ENCODE measurements at regions of chr6 and their contacts with region 1.

Region 1: GRCh38 chr6:128655978-128656498 is 135.6 kb upstream of the PTPRK start:
- DNase-seq: no peak
- H3K4me3 Mint-ChIP-seq: no peak overlapping the region
- H3K27ac Mint-ChIP-seq: peak overlapping the region; percentile 25
- H3K4me1 Mint-ChIP-seq: no peaks in the 10 kb centered on the region
- H3K27me3 Mint-ChIP-seq: no peaks in the 10 kb centered on the region

Region 2: DNA sequence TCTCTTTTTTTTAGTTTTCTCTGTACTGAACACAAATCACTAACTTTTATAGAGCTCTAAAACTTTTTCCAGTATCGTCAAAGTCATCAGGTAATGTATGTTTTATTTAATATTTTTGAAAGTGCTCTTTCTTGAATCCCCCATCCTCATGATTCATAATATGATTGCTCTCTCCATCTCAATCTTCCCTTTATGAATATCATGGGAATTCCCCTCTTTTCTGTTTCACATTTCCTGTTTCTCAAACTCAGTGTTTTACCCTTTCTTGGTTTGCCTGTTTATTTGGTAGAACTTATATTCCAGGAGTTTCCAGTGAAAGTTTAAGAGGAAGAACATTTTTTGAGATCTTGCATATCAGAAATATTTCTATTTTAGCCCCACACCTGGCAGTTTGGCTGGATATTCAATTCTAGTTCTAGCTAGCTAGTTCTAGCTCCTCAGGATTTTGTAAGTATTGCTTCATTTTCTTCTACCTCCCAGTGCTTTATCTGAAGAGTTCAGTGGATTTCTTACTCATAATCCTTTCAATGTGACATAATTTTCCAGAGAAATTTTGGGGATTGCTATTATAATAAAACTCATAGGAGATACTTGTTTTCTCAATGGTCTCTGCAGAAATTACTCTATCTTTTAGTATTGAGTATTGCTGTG is 1085.2 kb before region 1 on chr6:
- intact Hi-C with region 1: loop called (anchors 2 kb)
- DNase-seq: no peak
- H3K4me3 Mint-ChIP-seq: no peak overlapping the region
- H3K27ac Mint-ChIP-seq: no peak overlapping the region
- H3K4me1 Mint-ChIP-seq: peaks cover 12% of the 10 kb centered on the region
- H3K27me3 Mint-ChIP-seq: peaks cover 6% of the 10 kb centered on the region

Region 3: DNA sequence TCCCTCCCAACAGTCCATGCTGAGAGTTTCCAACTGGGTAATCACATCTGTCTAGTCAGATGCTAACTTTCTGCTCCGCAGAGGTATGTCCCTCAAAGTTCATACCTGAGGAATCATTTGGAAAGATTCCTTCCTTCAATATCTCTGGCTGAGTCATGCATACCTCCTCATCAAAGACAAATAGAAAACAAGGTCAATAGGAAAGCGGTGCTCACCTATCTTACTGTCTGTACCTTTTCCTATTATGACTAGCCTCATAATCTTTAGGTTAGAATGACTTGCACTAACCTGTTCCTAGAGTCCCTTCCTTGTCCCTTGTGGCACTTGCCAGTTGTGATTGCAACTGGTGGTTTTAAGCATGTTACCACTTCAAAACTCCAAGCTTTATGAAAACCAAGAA is 57.5 kb before region 1 on chr6:
- intact Hi-C with region 1: loop called (anchors 2 kb)
- DNase-seq: no peak
- H3K4me3 Mint-ChIP-seq: no peak overlapping the region
- H3K27ac Mint-ChIP-seq: no peak overlapping the region
- H3K4me1 Mint-ChIP-seq: peaks cover 21% of the 10 kb centered on the region
- H3K27me3 Mint-ChIP-seq: peaks cover 2% of the 10 kb centered on the region

Region 4: DNA sequence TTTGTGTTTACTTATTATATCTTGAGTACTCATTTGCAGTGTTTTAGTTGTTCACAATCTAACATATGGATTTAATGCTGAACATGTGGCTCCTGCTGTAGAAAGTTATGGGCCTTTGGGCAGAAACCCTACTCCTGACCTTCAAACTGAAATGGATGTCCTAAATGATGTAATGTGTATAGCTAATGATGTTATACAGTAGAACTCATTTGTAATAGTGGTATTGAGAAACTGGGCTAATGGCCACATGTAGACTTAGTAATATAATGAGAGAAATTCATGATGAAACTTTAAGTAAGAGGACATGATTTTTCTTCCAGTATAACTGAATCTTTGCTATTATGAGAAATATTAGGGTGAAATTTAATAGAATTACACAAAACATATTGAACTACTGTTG is 14.3 kb before region 1 on chr6:
- intact Hi-C with region 1: no loop called
- DNase-seq: no peak
- H3K4me3 Mint-ChIP-seq: no peak overlapping the region
- H3K27ac Mint-ChIP-seq: no peak overlapping the region
- H3K4me1 Mint-ChIP-seq: no peaks in the 10 kb centered on the region
- H3K27me3 Mint-ChIP-seq: no peaks in the 10 kb centered on the region

Region 5: DNA sequence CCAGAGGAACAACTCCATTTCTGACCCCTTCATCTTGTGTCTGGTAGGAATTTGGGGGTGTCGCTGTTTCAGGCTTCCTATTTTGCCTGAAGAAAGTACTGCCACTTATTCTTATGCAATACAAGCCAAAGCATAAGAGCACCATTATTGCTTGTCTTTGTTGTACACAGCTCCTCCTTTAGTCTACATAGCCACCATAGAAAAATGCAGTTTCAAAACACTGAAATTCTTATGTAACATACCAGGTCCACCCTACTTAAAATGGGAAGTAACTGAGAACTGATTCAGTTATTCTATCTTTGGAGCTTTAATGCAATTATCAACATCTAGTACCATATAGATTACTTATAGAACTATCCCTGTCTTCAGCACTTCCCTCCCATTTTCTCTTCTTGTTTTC is 798.5 kb after region 1 on chr6:
- intact Hi-C with region 1: loop called (anchors 10 kb)
- DNase-seq: no peak
- H3K4me3 Mint-ChIP-seq: no peak overlapping the region
- H3K27ac Mint-ChIP-seq: no peak overlapping the region
- H3K4me1 Mint-ChIP-seq: peaks cover 34% of the 10 kb centered on the region
- H3K27me3 Mint-ChIP-seq: peaks cover 5% of the 10 kb centered on the region

Measured in activated T-helper 1 cell treated with anti-CD3 and anti-CD28 coated beads, Interleukin-12 subunit alpha, Interleukin-12 subunit beta, Interleukin-2, Interleukin-4 antibody, amounts not matched to agents 30 ng/mL and 10 ng/mL and 1 ng/mL, durations not matched to agents 14 hours and 24 hours and 36 hours (primary cell).